Activated B cell treated with CpG ODN at 0.5 μM for 24 hours (primary cell): ENCODE measurements at regions of chr15 and their contacts with region 1.

Region 1: DNA sequence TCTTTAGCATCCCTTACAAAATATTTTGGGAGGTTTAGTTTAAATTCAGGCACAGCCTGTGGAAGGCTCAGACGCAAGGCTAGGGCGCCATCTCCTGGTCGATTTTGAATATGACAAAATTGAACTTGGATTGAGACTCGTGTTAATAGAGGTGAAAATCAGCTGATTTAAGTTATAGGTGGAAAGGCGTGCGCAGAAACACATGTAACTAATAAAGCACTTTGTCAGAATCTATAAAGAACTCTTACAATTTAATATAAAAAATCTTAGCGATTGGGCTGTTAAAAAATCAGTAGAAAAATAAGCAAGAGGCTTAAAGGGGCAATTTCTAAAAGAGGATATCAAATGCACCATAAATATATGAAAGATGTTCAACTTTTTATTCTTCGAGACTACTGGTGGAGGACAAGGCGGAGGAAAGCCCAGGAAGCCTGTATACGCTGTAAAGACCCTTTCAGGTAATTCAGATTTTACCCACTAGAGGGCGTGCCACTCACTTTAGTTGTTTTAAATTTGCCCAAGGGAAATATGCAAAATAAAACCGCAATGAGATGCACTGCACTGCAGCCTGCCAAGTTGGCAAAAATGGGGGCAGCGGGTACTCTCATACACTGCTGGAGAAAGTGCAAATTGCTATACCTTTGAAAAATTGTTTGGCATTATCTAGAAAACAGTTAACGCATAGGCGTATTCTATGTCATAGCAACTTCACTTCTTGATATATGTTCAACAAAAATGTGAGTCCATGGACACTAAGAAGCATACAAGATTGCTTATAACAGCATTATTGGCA is 64.7 kb downstream of the SLC30A4 start:
- DNase-seq: peak; percentile 26
- ATAC-seq: peak; percentile 74
- H3K4me3 Mint-ChIP-seq: peak overlapping the region; percentile 78
- H3K27ac Mint-ChIP-seq: peak overlapping the region; percentile 87
- H3K4me1 Mint-ChIP-seq: peaks cover 44% of the 10 kb centered on the region
- H3K27me3 Mint-ChIP-seq: no peaks in the 10 kb centered on the region
- CTCF ChIP-seq: peak; percentile 91

Region 2: GRCh38 chr15:44275150-44275830 is 1182.5 kb before region 1 on chr15:
- CTCF ChIA-PET with region 1: interaction called, 11 read pairs
- POLR2A ChIA-PET with region 1: no interaction called
- intact Hi-C with region 1: no loop called
- DNase-seq: no peak
- ATAC-seq: no peak
- H3K4me3 Mint-ChIP-seq: no peak overlapping the region
- H3K27ac Mint-ChIP-seq: no peak overlapping the region
- H3K4me1 Mint-ChIP-seq: no peaks in the 10 kb centered on the region
- H3K27me3 Mint-ChIP-seq: peaks cover 5% of the 10 kb centered on the region
- CTCF ChIP-seq: no peak

Region 3: DNA sequence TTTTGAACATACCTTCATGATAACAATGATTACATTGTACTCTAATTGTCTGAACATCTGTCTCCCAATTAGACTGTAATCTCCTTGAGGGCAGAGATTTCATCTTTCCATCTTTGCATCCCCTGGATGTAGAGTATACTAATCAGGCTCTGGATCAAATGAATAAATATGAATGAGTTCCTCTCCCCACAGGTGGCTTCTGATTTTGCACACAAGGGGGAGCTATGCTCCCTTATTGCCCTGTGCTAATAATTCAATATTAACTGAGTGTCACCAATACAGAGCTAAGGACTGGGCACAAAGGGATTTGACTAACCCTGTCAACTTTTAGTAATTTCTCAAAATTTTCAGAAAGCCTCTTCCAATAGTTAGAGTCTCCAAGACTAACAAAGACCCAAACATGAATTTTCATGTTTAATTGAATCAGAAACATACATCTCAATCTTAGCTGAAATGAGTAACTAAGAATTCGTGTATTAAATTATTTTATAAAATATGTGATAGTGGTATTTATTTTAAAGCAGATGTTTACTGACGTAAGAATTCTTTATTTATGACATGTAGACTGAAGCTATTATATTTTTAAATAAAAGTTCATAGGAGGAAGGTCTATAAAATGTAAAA is 331.2 kb before region 1 on chr15:
- CTCF ChIA-PET with region 1: interaction called, 10 read pairs
- POLR2A ChIA-PET with region 1: no interaction called
- intact Hi-C with region 1: loop called (anchors 1 kb)
- DNase-seq: no peak
- ATAC-seq: peak; percentile 68
- H3K4me3 Mint-ChIP-seq: no peak overlapping the region
- H3K27ac Mint-ChIP-seq: no peak overlapping the region
- H3K4me1 Mint-ChIP-seq: peaks cover 7% of the 10 kb centered on the region
- H3K27me3 Mint-ChIP-seq: peaks cover 59% of the 10 kb centered on the region
- CTCF ChIP-seq: no peak

Region 4: GRCh38 chr15:45205192-45205591 is 252.6 kb before region 1 on chr15:
- CTCF ChIA-PET with region 1: interaction called, 11 read pairs
- POLR2A ChIA-PET with region 1: no interaction called
- intact Hi-C with region 1: loop called (anchors 1 kb)
- DNase-seq: no peak
- ATAC-seq: no peak
- H3K4me3 Mint-ChIP-seq: no peak overlapping the region
- H3K27ac Mint-ChIP-seq: no peak overlapping the region
- H3K4me1 Mint-ChIP-seq: peaks cover 1% of the 10 kb centered on the region
- H3K27me3 Mint-ChIP-seq: peaks cover 23% of the 10 kb centered on the region
- CTCF ChIP-seq: no peak

Region 5: DNA sequence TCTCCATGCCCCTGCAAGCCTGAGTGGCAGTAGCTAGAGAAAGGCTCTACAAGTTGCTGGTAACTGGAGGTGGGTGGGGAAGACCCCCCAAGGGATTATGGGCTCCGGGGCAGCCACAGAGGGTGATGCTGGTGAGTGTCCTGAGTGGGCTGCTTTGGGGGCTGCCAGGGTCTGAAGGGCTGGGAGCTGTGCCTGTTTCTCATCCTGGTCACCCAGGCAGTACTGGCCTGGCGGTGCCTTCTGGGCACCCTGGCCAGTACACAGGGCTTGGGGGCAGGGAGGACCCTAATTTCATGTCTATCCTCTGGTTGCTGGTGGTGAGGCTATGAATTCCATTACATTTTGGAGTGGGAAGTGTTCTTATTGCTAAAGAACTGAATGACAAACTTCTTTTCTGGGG is 33.4 kb before region 1 on chr15:
- CTCF ChIA-PET with region 1: interaction called, 79 read pairs
- POLR2A ChIA-PET with region 1: no interaction called
- intact Hi-C with region 1: loop called (anchors 5 kb)
- DNase-seq: no peak
- ATAC-seq: no peak
- H3K4me3 Mint-ChIP-seq: no peak overlapping the region
- H3K27ac Mint-ChIP-seq: no peak overlapping the region
- H3K4me1 Mint-ChIP-seq: no peaks in the 10 kb centered on the region
- H3K27me3 Mint-ChIP-seq: no peaks in the 10 kb centered on the region
- CTCF ChIP-seq: no peak

Region 6: DNA sequence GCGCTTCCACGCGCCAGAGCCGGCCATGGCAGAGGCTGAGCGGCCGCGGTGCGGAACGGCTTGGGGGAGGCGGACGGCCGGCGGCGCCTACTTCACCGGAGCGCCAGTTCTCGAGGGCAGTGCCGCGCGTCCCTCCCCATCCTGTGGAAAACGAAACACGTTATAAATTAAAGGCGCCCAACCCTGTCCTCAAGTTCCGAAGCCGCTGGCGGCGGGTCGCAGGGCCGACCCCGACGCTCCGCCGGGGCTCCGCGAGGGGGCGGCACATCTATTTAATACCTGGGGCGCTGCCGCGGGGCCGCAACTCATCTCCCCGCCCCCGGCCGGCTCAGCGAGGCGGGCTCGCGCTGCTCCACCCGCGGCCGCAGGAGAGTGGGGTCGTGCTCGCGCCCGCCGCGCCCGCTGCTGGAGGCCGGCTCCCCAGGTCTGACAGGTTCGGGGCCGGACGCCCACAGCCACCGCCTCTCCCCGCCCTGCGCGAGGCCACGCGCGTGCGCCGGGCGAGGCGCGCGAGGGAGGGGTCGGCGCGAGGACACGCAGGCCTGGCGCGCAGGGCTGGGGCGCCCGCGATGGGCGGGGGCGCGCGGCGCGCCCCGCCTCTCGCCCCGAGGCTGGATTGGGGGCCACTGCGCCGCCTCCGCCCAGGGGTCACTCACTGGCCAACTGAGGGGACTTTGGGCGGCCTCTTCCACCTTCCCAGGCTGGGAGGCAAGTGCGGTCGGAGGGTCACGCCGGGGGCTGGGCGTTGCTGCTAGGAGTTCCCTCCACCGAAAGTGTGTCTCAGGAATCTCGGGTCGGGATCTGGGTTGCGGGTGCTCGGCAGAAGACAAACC is 64.7 kb after region 1 on chr15 and contains the start of gene SLC30A4:
- CTCF ChIA-PET with region 1: interaction called, 7 read pairs
- POLR2A ChIA-PET with region 1: no interaction called
- intact Hi-C with region 1: loop called (anchors 1 kb)
- DNase-seq: peak; percentile 76
- ATAC-seq: peak; percentile 86
- H3K4me3 Mint-ChIP-seq: peak within 1 kb of the TSS; percentile 90
- H3K27ac Mint-ChIP-seq: peak within 1 kb of the TSS; percentile 83
- H3K4me1 Mint-ChIP-seq: peaks cover 42% of the 10 kb centered on the region
- H3K27me3 Mint-ChIP-seq: no peaks in the 10 kb centered on the region
- CTCF ChIP-seq: no peak
- total RNA-seq, gene SLC30A4: 3.7 and 3.9 TPM in 2 replicates

Region 7: DNA sequence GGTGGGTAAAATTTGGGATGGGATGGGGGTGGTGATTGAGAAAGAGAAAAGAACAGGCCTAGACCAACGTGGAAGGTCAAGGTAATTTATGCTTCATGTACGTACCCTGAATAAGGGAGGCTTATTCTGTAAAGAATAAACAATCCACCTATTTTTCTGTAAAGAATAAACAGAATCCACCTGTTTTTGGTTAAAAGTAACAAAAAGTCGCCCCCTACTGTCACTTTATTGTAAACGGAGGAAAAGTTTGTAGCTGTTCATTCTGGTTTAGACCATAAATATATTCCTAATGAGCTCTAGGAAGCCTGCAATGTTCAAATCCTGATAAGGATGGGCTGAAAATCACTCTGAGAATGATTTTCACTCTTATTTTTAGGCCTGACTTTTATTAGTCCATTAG is 153.5 kb after region 1 on chr15:
- CTCF ChIA-PET with region 1: interaction called, 89 read pairs
- POLR2A ChIA-PET with region 1: interaction called, 4 read pairs
- intact Hi-C with region 1: loop called (anchors 1 kb)
- DNase-seq: no peak
- ATAC-seq: no peak
- H3K4me3 Mint-ChIP-seq: no peak overlapping the region
- H3K27ac Mint-ChIP-seq: no peak overlapping the region
- H3K4me1 Mint-ChIP-seq: peaks cover 12% of the 10 kb centered on the region
- H3K27me3 Mint-ChIP-seq: no peaks in the 10 kb centered on the region
- CTCF ChIP-seq: no peak